ENCODE measurements at regions of chr21 and their contacts with region 1.

Region 1: GRCh38 chr21:25607151-25608043 is at the start of gene MRPL39:
- DNase-seq: peak; percentile 71 to 91 (median 84)
- ATAC-seq: peak; percentile 89 to 92
- H3K4me3 Mint-ChIP-seq: peak within 1 kb of the TSS; percentile 93 to 100 (median 100)
- H3K27ac Mint-ChIP-seq: peak within 1 kb of the TSS; percentile 97 to 100 (median 100)
- H3K4me1 Mint-ChIP-seq: peaks cover 21 to 48% (median 41%) of the 10 kb centered on the region in 4 donors
- H3K27me3 Mint-ChIP-seq: no peaks in the 10 kb centered on the region
- polyA plus RNA-seq, gene MRPL39: 29.6 to 41.1 (median 37.3) TPM

Region 2: DNA sequence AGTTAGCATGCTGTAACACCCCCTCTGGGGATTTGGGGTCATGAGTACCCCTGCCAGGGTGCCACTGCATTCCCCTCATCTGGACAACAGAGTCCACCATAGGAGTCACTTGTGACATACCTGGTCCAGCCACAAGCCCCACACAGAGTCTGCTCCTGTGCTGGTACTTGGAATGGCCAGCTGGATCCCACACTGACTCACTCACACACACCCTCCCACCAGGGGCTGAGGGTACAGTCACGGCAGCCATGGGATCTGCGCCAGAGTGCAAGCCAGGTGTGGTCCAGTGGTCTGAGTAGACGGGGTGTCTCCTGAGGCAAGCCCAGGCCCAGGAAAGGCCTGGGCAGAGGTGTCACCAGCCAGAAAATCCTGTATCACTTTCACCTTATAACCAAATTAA is 67.8 kb before region 1 on chr21:
- POLR2A ChIA-PET with region 1: no interaction called
- DNase-seq: no peak
- ATAC-seq: no peak
- H3K4me3 Mint-ChIP-seq: no peak overlapping the region
- H3K27ac Mint-ChIP-seq: no peak overlapping the region
- H3K4me1 Mint-ChIP-seq: no peaks in the 10 kb centered on the region
- H3K27me3 Mint-ChIP-seq: no peaks in the 10 kb centered on the region

Region 3: GRCh38 chr21:25734904-25735645 is 127.7 kb after region 1 on chr21 and contains the starts of genes ATP5PF and GABPA:
- POLR2A ChIA-PET with region 1: interaction called, 38 read pairs
- DNase-seq: peak; percentile 93 to 99 (median 98)
- ATAC-seq: peak; percentile 88 to 92
- H3K4me3 Mint-ChIP-seq: peak within 1 kb of the TSS; percentile 96 to 100 (median 100)
- H3K27ac Mint-ChIP-seq: peak within 1 kb of the TSS; percentile 98 to 100 (median 100)
- H3K4me1 Mint-ChIP-seq: peaks cover 17 to 72% (median 66%) of the 10 kb centered on the region in 4 donors
- H3K27me3 Mint-ChIP-seq: peaks cover 0 to 1% (median 0%) of the 10 kb centered on the region in 5 donors
- polyA plus RNA-seq, gene ATP5PF: 328 to 439 (median 390) TPM
- polyA plus RNA-seq, gene GABPA: 16.8 to 18.4 (median 16.8) TPM